Mucosa of descending colon (tissue), 3 donors: ENCODE measurements at regions of chr6 and their contacts with region 1.

Region 1: DNA sequence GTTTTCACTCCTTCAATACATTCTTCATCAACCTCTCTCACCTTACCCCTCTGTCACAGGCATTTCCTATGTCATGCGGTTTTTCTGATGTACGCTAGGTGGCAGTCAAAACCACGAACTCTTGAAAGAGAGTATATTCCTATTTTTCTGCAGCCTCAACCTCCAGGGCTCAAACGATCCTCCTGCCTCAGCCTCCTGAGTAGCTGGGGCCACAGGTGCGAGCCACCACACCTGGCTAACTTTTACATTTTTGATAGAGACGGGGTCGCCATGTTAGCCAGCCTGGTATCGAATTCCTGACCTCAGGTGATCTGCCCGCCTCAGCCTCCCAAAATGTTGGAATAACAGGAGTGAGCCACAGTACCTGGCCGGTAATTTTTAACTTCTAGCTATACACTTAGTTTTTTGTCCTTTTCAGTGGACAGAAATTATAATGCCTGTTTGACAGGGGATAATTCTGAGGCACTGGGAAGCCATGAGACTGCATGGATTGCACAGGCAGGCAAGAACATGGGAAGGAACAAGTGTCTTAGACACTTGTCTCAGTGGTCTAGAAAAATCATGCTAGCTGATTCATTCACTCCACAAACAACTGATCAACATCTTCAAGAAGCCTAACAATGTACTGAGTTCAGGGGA is 22.5 kb upstream of the HFE start:
- DNase-seq: no peak
- ATAC-seq: peak; percentile 77
- H3K4me3 ChIP-seq: no peak overlapping the region
- H3K4me1 ChIP-seq: no peaks in the 10 kb centered on the region
- CTCF ChIP-seq: peak; percentile 62

Region 2: GRCh38 chr6:25156096-25156495 is 908.6 kb before region 1 on chr6:
- intact Hi-C with region 1: no loop called
- DNase-seq: no peak
- ATAC-seq: no peak
- H3K4me3 ChIP-seq: no peak overlapping the region
- H3K4me1 ChIP-seq: peaks cover 10% of the 10 kb centered on the region
- CTCF ChIP-seq: no peak

Region 3: GRCh38 chr6:26097268-26097875 is 32.6 kb after region 1 on chr6:
- intact Hi-C with region 1: loop called (anchors 5 kb)
- DNase-seq: peak in 2 of 3 donors; percentile 53 to 85
- ATAC-seq: peak; percentile 83
- H3K4me3 ChIP-seq: no peak overlapping the region
- H3K4me1 ChIP-seq: no peaks in the 10 kb centered on the region
- CTCF ChIP-seq: peak; percentile 66

Region 4: GRCh38 chr6:26103770-26104456 is 39.2 kb after region 1 on chr6:
- intact Hi-C with region 1: loop called (anchors 5 kb)
- DNase-seq: peak; percentile 88 to 92 (median 89)
- ATAC-seq: peak; percentile 93
- H3K4me3 ChIP-seq: no peak overlapping the region
- H3K4me1 ChIP-seq: peaks cover 17% of the 10 kb centered on the region
- CTCF ChIP-seq: peak; percentile 16

Region 5: DNA sequence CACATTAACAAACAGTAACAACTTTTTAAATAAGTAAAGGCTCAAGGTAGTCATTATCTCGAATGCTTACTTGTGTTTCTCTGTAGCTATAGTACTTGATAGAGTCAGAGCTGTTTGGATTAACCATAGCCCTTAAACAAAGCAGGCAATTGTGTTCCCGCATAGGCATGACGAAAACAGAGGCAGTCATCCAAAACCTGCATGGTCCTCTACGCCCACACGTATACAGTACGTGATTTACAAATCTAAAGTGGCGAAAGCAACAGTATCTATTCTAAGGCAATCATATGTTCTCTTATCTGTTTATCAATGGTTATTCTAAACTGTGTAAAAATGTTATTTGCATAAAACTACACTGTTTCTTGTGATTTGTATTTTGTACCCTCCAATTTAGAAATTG is 54.3 kb after region 1 on chr6:
- intact Hi-C with region 1: no loop called
- DNase-seq: no peak
- ATAC-seq: no peak
- H3K4me3 ChIP-seq: no peak overlapping the region
- H3K4me1 ChIP-seq: no peaks in the 10 kb centered on the region
- CTCF ChIP-seq: no peak